Heart right ventricle (tissue), 16 donors: ENCODE measurements at regions of chr21 and their contacts with region 1.

Region 1: GRCh38 chr21:46228345-46229051 is at the start of gene LSS:
- DNase-seq: peak; percentile 96 to 99
- ATAC-seq: peak; percentile 94 to 97 (median 96)
- H3K4me3 ChIP-seq: peak within 1 kb of the TSS; percentile 67 to 100 (median 95)
- H3K27ac ChIP-seq: peak within 1 kb of the TSS; percentile 67 to 91 (median 87)
- H3K4me1 ChIP-seq: peaks cover 5 to 47% (median 31%) of the 10 kb centered on the region in 9 donors
- H3K27me3 ChIP-seq: no peaks in the 10 kb centered on the region
- CTCF ChIP-seq: no peak
- total RNA-seq, gene LSS: 30.5 to 74.7 (median 40.7) TPM

Region 2: GRCh38 chr21:46144464-46145070 is 83.9 kb before region 1 on chr21:
- intact Hi-C with region 1: loop called in 6 of 10 experiments (anchors 1 to 10 kb)
- DNase-seq: peak in 1 of 2 donors; percentile 9
- ATAC-seq: no peak
- H3K4me3 ChIP-seq: no peak overlapping the region
- H3K27ac ChIP-seq: no peak overlapping the region
- H3K4me1 ChIP-seq: peaks cover 0 to 9% (median 5%) of the 10 kb centered on the region in 9 donors
- H3K27me3 ChIP-seq: no peaks in the 10 kb centered on the region
- CTCF ChIP-seq: no peak

Region 3: DNA sequence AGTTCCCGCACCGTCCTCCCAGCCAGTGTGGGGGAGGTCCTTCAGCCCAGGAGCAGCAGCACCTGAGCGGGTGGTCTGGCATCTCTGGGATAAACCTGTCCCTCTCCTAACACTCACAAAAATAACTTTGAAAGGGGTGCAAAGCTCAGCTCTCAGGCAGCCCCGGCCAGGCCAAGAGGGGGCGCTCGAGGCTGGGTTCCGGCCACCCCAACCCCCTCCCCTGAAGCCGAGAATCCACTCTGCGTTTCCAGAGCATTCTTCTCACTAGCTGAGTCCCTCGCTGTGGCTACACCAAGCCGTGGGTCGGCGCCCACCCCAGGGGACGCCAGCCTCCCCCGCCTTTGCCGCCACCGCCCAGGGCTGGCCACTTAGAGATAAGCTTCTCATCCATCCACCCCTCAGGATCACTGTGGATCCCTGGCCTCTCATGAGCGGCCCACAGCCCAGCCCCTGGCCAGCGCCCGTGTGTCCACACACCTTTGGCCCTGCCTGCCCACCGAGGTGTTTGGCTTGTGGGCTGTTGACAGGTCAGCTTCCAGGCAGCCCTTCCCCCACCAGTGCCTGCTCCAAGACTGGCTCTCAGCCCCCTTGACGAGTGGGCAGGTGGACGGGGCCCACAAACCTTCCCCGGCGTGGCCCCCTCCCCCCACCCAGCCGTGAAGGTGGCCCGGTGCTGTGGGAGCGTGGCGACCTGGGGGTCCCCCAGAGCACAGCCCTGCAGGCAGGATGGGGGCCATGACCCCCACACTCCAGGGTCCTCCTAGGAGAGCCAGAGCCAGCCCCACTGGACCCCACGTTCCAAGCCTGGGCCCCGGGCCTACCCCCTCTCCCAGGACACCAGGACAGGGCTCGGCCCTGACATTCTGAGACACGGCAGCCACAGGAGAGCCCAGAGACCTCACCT is 75.0 kb before region 1 on chr21:
- intact Hi-C with region 1: loop called in 4 of 10 experiments (anchors 5 to 10 kb)
- DNase-seq: peak in 1 of 2 donors; percentile 69
- ATAC-seq: peak; percentile 55 to 76 (median 70)
- H3K4me3 ChIP-seq: peak overlapping the region in 9 of 10 donors; percentile 5 to 39 (median 31)
- H3K27ac ChIP-seq: peak overlapping the region in 5 of 10 donors; percentile 6 to 42 (median 30)
- H3K4me1 ChIP-seq: peaks cover 4 to 15% (median 10%) of the 10 kb centered on the region in 9 donors
- H3K27me3 ChIP-seq: no peaks in the 10 kb centered on the region
- CTCF ChIP-seq: peak; percentile 56 to 78 (median 70)

Region 4: GRCh38 chr21:46184625-46185555 is 43.6 kb before region 1 on chr21:
- intact Hi-C with region 1: loop called in 4 of 10 experiments (anchors 2 to 5 kb)
- DNase-seq: peak; percentile 81 to 89
- ATAC-seq: peak in 7 of 8 donors; percentile 55 to 81 (median 74)
- H3K4me3 ChIP-seq: peak overlapping the region; percentile 52 to 85 (median 66)
- H3K27ac ChIP-seq: peak overlapping the region; percentile 65 to 97 (median 82)
- H3K4me1 ChIP-seq: peaks cover 14 to 36% (median 31%) of the 10 kb centered on the region in 9 donors
- H3K27me3 ChIP-seq: no peaks in the 10 kb centered on the region
- CTCF ChIP-seq: no peak

Region 5: GRCh38 chr21:46285761-46286496 is 57.4 kb after region 1 on chr21 and contains the start of gene YBEY:
- intact Hi-C with region 1: loop called in 1 of 10 experiments (anchors 10 kb)
- DNase-seq: peak; percentile 91
- ATAC-seq: peak; percentile 97 to 98 (median 98)
- H3K4me3 ChIP-seq: peak within 1 kb of the TSS; percentile 59 to 93 (median 82)
- H3K27ac ChIP-seq: peak within 1 kb of the TSS; percentile 89 to 98 (median 94)
- H3K4me1 ChIP-seq: peaks cover 22 to 69% (median 52%) of the 10 kb centered on the region in 9 donors
- H3K27me3 ChIP-seq: no peaks in the 10 kb centered on the region
- CTCF ChIP-seq: peak in 8 of 9 donors; percentile 7 to 62 (median 38)
- total RNA-seq, gene YBEY: 11.9 to 25.7 (median 16.7) TPM